ENCODE measurements at regions of chr6 and their contacts with region 1.

Region 1: GRCh38 chr6:3848925-3849605 is at the start of gene FAM50B:
- H3K4me3 ChIP-seq: peak within 1 kb of the TSS; percentile 52
- H3K27ac ChIP-seq: peak within 1 kb of the TSS; percentile 37; the same call in 1 of the 2 replicates
- H3K4me1 ChIP-seq: no peaks in the 10 kb centered on the region
- CTCF ChIP-seq: no peak

Region 2: GRCh38 chr6:3410385-3411360 is 438.4 kb before region 1 on chr6:
- CTCF ChIA-PET with region 1: no interaction called
- POLR2A ChIA-PET with region 1: no interaction called
- H3K4me3 ChIP-seq: no peak overlapping the region
- H3K27ac ChIP-seq: no peak overlapping the region
- H3K4me1 ChIP-seq: peaks cover 8% of the 10 kb centered on the region
- CTCF ChIP-seq: 0 out of 2 replicates have a peak, but pooled peaks have one; percentile 27

Region 3: GRCh38 chr6:3721810-3722626 is 127.0 kb before region 1 on chr6:
- CTCF ChIA-PET with region 1: no interaction called
- POLR2A ChIA-PET with region 1: no interaction called
- H3K4me3 ChIP-seq: no peak overlapping the region
- H3K27ac ChIP-seq: no peak overlapping the region
- H3K4me1 ChIP-seq: no peaks in the 10 kb centered on the region
- CTCF ChIP-seq: no peak

Region 4: DNA sequence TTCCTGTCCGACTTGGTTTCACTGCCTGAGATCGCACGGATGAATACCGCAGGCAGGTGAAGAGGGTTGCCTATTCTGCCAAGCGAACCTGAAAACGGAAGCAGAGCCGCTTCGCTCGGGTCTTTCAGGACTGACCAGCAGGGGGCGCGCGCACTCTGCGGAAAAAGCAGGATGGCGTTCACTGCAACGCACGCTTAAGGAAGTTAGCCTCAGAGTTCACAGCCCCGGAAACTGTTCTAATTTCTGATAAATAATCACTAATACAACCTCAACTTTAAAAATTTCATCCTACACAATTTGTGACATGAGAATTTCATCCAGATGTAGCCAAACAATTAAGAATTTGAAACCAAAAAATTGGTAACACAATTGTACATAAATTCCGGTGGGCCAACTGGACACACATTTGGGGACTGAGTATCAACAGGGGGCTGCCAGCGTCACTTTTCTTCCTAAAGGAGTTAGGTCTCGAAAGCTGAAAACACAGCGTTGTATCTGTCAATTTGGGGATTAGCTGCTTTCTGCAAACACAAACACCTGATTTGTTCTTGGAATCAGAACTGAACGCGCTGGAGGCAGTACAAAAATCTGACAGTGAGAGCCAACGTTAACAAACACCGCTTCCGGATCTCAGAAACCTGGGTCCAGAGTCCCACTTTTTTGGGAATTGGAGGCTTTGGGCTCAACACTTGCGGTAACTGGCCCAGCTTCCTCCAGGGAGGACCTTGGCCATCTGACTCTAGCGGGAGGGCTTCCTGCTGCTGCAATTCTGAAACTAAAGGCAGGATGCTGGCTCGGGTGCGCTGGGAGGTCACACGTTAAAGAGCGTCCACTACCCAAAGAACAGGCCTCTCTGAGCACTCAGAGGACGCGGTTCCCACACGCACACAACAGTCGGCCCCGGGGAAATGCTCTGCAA is 106.4 kb before region 1 on chr6:
- CTCF ChIA-PET with region 1: interaction called, 33 read pairs
- POLR2A ChIA-PET with region 1: interaction called, 8 read pairs
- H3K4me3 ChIP-seq: no peak overlapping the region
- H3K27ac ChIP-seq: no peak overlapping the region
- H3K4me1 ChIP-seq: peaks cover 6% of the 10 kb centered on the region; the same call in 1 of the 2 replicates
- CTCF ChIP-seq: peak; percentile 79

Region 5: GRCh38 chr6:3808759-3809514 is 40.1 kb before region 1 on chr6:
- CTCF ChIA-PET with region 1: interaction called, 12 read pairs
- POLR2A ChIA-PET with region 1: no interaction called
- H3K4me3 ChIP-seq: no peak overlapping the region
- H3K27ac ChIP-seq: no peak overlapping the region
- H3K4me1 ChIP-seq: peaks cover 4% of the 10 kb centered on the region; the same call in 1 of the 2 replicates
- CTCF ChIP-seq: no peak

Region 6: DNA sequence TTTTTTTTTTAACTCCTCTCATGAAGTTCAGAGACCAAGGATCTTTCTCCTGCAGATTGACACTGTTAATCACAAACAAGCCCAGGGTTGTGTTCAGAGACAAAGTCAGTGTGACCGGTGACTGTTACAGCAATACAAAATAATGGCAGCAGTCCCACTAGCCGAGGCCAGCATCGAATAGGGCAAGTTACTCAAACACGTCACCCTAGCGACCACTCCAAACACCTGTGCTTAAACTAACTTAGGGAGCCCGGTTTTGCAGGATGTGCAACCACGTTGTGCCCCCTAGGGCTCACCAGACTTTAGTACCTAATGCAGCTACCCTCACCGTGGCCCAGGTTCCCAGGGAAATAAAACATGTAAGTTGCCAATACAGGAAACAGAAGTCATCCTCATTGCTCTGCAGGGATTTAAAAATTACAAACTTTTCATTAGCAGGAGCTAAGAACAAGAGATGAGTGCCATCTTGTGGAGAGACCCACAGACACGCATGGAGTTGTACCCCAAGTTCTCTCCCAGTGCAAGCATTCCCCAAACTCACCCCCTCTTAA is 38.2 kb after region 1 on chr6:
- CTCF ChIA-PET with region 1: interaction called, 13 read pairs
- POLR2A ChIA-PET with region 1: interaction called, 5 read pairs
- H3K4me3 ChIP-seq: no peak overlapping the region
- H3K27ac ChIP-seq: no peak overlapping the region
- H3K4me1 ChIP-seq: no peaks in the 10 kb centered on the region
- CTCF ChIP-seq: no peak

Region 7: DNA sequence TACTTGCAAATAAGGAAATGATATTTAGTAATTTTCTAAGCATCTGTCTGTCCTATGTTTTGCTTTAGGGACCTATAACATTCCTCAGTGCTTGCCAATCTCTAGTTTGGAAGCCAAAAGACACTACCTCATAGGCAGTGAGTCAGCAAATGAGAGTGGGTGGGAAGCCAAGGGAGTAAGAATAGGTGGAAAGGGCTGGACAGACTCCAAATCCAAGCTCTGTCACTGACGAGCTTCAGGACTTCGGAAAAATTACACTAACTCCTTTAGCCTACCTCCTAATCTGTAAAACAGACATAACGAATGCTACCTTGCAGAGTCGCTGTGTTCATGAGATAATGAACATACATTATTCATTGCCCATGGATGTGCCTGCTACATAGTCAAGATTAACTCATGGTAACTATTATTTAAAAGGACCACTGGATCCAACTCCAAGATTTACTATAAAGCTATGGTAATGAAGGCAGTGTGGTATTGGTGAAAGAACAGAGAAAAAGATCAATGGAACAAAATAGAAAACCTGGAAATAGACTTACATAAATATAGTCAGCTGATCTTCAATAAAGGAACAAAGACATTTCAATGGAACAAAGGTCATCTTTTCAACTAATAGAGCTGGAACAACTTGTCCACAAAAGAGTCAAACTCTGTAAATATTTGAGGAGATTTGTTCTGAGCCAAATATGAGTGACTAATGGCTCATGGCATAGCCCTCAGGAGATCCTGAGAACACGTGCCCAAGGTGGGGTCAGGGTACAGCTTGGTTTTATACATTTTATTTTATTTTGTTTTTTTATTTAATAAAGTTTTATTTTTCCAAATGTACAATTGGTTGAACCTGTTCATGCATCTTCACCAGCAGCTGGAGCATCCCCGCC is 64.3 kb after region 1 on chr6:
- CTCF ChIA-PET with region 1: interaction called, 15 read pairs
- POLR2A ChIA-PET with region 1: interaction called, 9 read pairs
- H3K4me3 ChIP-seq: no peak overlapping the region
- H3K27ac ChIP-seq: peak overlapping the region; percentile 44
- H3K4me1 ChIP-seq: peaks cover 31% of the 10 kb centered on the region
- CTCF ChIP-seq: no peak

Region 8: GRCh38 chr6:3990692-3991501 is 141.8 kb after region 1 on chr6:
- CTCF ChIA-PET with region 1: interaction called, 17 read pairs
- POLR2A ChIA-PET with region 1: no interaction called
- H3K4me3 ChIP-seq: no peak overlapping the region
- H3K27ac ChIP-seq: no peak overlapping the region; the same call in 1 of the 2 replicates
- H3K4me1 ChIP-seq: no peaks in the 10 kb centered on the region
- CTCF ChIP-seq: peak; percentile 94